ENCODE measurements at regions of chr11 and their contacts with region 1.

Region 1: GRCh38 chr11:93727985-93728791 is 13.1 kb downstream of the TAF1D start:
- DNase-seq: no peak
- ATAC-seq: peak; percentile 7
- H3K4me3 ChIP-seq: no peak overlapping the region
- H3K27ac ChIP-seq: no peak overlapping the region
- H3K4me1 ChIP-seq: no peaks in the 10 kb centered on the region
- H3K27me3 ChIP-seq: no peaks in the 10 kb centered on the region
- CTCF ChIP-seq: no peak
- EP300 ChIP-seq: no peak
- POLR2A ChIP-seq: 0 out of 2 replicates have a peak, but pooled peaks have one; percentile 39
- RAD21 ChIP-seq: no peak

Region 2: GRCh38 chr11:93525601-93526345 is 202.4 kb before region 1 on chr11:
- CTCF ChIA-PET with region 1: no interaction called
- POLR2A ChIA-PET with region 1: no interaction called
- RAD21 ChIA-PET with region 1: no interaction called
- SMC1A ChIA-PET with region 1: no interaction called
- in situ Hi-C with region 1: no loop called
- intact Hi-C with region 1: no loop called
- DNase-seq: no peak
- ATAC-seq: peak; percentile 43
- H3K4me3 ChIP-seq: peak overlapping the region; percentile 56; the same call in 1 of the 2 replicates
- H3K27ac ChIP-seq: peak overlapping the region; percentile 94
- H3K4me1 ChIP-seq: peaks cover 85% of the 10 kb centered on the region
- H3K27me3 ChIP-seq: no peaks in the 10 kb centered on the region
- CTCF ChIP-seq: no peak
- EP300 ChIP-seq: 0 out of 4 replicates have a peak, but pooled peaks of 1 of the 2 experiments have one; percentile 27
- POLR2A ChIP-seq: no peak
- RAD21 ChIP-seq: no peak

Region 3: GRCh38 chr11:93718057-93718563 is 10.1 kb before region 1 on chr11:
- CTCF ChIA-PET with region 1: interaction called, 4 read pairs
- POLR2A ChIA-PET with region 1: interaction called, 4 read pairs
- RAD21 ChIA-PET with region 1: interaction called, 3 read pairs
- SMC1A ChIA-PET with region 1: interaction called, 30 read pairs
- in situ Hi-C with region 1: no loop called
- intact Hi-C with region 1: no loop called
- DNase-seq: peak; percentile 64
- ATAC-seq: peak; percentile 93
- H3K4me3 ChIP-seq: no peak overlapping the region
- H3K27ac ChIP-seq: peak overlapping the region; percentile 82
- H3K4me1 ChIP-seq: peaks cover 12% of the 10 kb centered on the region
- H3K27me3 ChIP-seq: no peaks in the 10 kb centered on the region
- CTCF ChIP-seq: no peak
- EP300 ChIP-seq: peak; percentile 72 to 96; a peak in 3 of 4 replicates
- POLR2A ChIP-seq: no peak
- RAD21 ChIP-seq: no peak

Measured in GM12878 (cell line).